ENCODE measurements at regions of chr22 and their contacts with region 1.

Region 1: DNA sequence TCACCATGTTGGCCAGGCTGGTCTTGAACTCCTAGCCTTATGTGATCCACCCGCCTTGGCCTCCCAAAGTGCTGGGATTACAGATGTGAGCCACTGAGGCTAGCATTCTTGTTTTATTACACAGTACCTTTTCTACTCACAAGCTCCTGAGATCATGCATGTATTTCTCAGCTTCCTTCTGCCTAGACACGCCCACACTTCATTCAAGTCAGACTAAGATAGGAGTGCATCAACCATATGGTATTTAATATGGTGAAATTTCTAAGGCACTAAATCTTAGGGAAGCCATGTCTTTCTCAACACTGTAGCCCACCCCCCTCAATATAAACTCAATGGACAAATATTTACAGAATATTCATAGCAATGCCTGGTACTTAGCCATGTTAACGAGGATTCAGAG is 62.1 kb downstream of the SLC25A17 start:
- DNase-seq: no peak
- ATAC-seq: no peak
- H3K4me3 ChIP-seq: no peak overlapping the region
- H3K4me3 Mint-ChIP-seq: no peak overlapping the region
- H3K27ac ChIP-seq: no peak overlapping the region
- H3K27ac Mint-ChIP-seq: no peak overlapping the region
- H3K4me1 ChIP-seq: no peaks in the 10 kb centered on the region
- H3K4me1 Mint-ChIP-seq: peaks cover 6% of the 10 kb centered on the region
- H3K27me3 ChIP-seq: no peaks in the 10 kb centered on the region
- H3K27me3 Mint-ChIP-seq: no peaks in the 10 kb centered on the region
- CTCF ChIP-seq: no peak

Region 2: DNA sequence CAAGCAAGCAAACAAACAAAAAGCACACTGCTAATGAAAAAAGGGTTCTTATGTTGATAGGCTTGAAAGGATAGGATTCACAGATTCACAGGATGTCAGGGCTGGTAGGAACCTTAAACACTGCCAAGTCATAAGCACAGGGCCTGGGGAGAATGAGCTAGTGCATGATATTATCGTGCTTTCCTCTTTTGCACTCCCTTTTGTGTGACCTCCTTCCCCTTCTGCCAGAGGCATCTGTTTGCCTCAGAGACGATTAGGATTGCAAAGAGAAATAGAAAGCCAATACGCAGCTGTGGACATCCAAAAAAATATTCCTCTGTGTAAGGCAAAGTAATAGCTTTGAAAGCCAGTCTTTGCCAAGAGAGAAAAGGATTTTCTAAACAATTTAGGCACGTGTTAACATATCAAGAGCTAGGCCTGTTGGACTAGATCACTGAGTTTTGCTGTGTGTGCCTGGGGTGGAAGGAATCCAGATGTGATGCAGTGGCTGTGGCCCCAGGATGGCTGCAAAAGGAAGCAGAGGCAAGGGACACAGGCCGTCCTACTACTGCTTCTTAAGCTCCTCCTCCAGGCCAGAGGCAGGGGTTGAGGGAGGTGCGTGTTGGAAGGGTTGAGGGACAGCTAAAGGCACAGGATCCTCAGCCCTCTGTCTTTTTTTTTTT is 47.2 kb before region 1 on chr22:
- CTCF ChIA-PET with region 1: no interaction called
- POLR2A ChIA-PET with region 1: no interaction called
- intact Hi-C with region 1: no loop called
- DNase-seq: no peak
- ATAC-seq: no peak
- H3K4me3 ChIP-seq: no peak overlapping the region
- H3K4me3 Mint-ChIP-seq: no peak overlapping the region
- H3K27ac ChIP-seq: no peak overlapping the region
- H3K27ac Mint-ChIP-seq: no peak overlapping the region
- H3K4me1 ChIP-seq: peaks cover 15% of the 10 kb centered on the region
- H3K4me1 Mint-ChIP-seq: peaks cover 16% of the 10 kb centered on the region
- H3K27me3 ChIP-seq: no peaks in the 10 kb centered on the region
- H3K27me3 Mint-ChIP-seq: no peaks in the 10 kb centered on the region
- CTCF ChIP-seq: no peak

Region 3: DNA sequence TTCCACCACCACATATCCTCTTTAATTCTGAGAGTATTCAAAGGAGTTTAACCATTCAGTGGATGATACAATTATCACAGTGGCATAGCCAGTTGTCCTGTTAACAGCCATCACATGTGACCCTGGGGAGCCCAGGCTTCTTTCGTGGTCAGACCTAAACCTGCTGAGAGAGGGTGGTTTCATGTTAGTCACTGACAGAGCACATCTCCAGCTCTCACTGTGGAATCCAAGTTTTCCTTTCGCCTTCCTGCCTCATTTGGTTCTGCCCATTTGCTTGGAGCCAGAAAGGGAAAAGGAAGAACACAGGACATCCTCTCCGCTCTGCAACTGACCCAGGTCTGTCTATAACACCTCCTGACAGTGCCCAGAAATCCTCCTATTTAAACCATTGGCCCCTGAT is 17.4 kb before region 1 on chr22:
- CTCF ChIA-PET with region 1: no interaction called
- POLR2A ChIA-PET with region 1: no interaction called
- intact Hi-C with region 1: loop called in 1 of 2 experiments (anchors 2 kb)
- DNase-seq: no peak
- ATAC-seq: no peak
- H3K4me3 ChIP-seq: no peak overlapping the region
- H3K4me3 Mint-ChIP-seq: no peak overlapping the region
- H3K27ac ChIP-seq: no peak overlapping the region
- H3K27ac Mint-ChIP-seq: no peak overlapping the region
- H3K4me1 ChIP-seq: no peaks in the 10 kb centered on the region
- H3K4me1 Mint-ChIP-seq: no peaks in the 10 kb centered on the region
- H3K27me3 ChIP-seq: no peaks in the 10 kb centered on the region
- H3K27me3 Mint-ChIP-seq: no peaks in the 10 kb centered on the region
- CTCF ChIP-seq: no peak